HCT116 (cell line): ENCODE measurements at regions of chr1 and their contacts with region 1.

Region 1: GRCh38 chr1:27671964-27672749 is at the start of gene IFI6:
- DNase-seq: peak; percentile 79
- ATAC-seq: peak; percentile 93
- H3K4me3 ChIP-seq: peak within 1 kb of the TSS; percentile 41 to 56
- H3K27ac ChIP-seq: peak within 1 kb of the TSS; percentile 50
- H3K4me1 ChIP-seq: peaks cover 18 to 45% of the 10 kb centered on the region in 2 experiments
- H3K27me3 ChIP-seq: no peaks in the 10 kb centered on the region
- CTCF ChIP-seq: peak; percentile 7 to 36 (median 34); a peak in 4 of 6 replicates
- POLR2A ChIP-seq: peak; percentile 61
- RAD21 ChIP-seq: peak; percentile 37; the same call in 1 of the 2 replicates
- total RNA-seq, gene IFI6: 14.8 TPM

Region 2: DNA sequence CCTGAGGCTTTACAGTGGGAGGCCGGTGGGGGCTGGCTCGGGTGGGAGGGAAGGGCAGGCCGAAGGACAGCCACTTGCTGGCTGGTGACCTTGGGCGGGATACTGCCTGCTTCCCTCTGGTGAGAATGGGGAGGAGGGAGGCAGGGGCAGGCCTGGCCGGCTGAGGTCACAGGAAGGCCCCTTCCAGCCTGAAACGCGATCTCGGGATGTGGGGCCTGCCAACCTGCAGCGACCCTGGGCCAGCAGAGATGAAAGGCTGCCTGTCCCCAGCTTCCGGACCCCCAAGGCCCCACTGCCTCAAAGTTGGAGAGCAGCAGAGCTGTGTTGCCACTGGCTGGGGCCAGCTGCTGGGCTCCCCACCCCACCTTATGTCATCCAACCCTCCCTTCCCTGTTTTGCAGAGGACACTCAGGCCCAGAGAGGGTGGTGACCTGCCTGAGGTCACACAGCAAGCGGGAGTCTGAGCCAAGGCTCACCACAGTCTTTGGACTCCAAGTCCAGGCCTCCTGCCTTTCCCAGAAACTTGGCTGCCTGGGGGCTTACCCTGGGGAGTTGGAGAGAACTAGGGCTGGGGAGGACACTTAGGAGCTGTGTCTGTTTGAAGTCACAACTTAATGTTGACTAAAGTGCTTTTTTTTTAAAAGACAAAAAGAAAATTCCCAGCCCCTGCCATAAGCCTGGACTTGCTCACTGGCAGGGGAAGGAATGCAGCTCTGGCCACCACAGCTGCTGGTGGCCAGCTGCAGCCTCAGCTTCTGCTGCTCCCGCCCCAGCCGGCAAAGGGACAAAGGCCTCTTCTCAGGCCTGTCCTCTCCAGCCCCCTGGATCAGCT is 167.4 kb before region 1 on chr1:
- CTCF ChIA-PET with region 1: no interaction called
- POLR2A ChIA-PET with region 1: no interaction called
- RAD21 ChIA-PET with region 1: no interaction called
- intact Hi-C with region 1: no loop called
- DNase-seq: no peak
- ATAC-seq: no peak
- H3K4me3 ChIP-seq: no peak overlapping the region
- H3K27ac ChIP-seq: no peak overlapping the region; the same call in 1 of the 2 replicates
- H3K4me1 ChIP-seq: peaks cover 7 to 32% of the 10 kb centered on the region in 2 experiments; a peak in 3 of 4 replicates
- H3K27me3 ChIP-seq: no peaks in the 10 kb centered on the region
- CTCF ChIP-seq: no peak
- POLR2A ChIP-seq: no peak
- RAD21 ChIP-seq: no peak

Region 3: DNA sequence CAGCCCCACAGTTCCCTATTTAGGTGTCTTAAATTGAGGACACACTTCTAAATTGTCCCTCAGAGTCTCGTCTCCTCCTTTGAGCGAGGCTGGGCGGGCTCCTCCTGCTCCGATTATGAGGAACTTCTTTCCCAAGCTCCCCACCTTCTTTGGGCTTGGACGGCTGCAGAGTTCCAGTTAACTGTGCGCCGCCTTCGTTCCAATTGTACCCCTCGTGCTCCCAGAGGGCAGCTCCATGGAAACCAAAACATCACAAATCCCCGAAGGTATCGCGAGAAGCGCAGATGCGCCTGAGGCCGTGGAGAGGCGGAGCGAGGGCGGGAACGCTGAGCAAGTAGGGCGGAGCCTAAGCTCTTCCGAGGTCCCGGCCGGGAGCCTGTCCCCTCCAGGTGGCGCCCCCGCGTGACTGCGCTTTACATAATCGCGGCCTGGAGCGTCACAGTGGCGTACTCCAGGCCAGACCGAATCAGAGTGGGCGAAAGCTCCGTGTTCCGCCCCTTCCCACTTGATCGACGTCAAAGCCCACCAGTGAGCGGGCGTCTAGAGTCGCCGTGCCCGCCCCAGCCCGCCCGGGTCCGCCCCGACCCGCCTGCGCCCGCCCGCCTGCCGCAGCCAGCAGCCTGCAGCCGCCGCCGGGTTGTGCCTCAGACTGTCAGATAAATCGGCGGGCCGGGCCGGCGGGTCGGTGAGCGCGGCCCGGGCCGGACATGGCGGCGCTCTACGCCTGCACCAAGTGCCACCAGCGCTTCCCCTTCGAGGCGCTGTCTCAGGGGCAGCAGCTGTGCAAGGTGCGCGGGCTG is 53.4 kb after region 1 on chr1 and contains the start of gene FAM76A:
- CTCF ChIA-PET with region 1: interaction called, 11 read pairs
- POLR2A ChIA-PET with region 1: interaction called, 7 read pairs
- RAD21 ChIA-PET with region 1: interaction called in 1 of 2 experiments, 3 read pairs
- intact Hi-C with region 1: no loop called
- DNase-seq: peak; percentile 98
- ATAC-seq: peak; percentile 95
- H3K4me3 ChIP-seq: peak within 1 kb of the TSS; percentile 65 to 66
- H3K27ac ChIP-seq: peak within 1 kb of the TSS; percentile 76
- H3K4me1 ChIP-seq: peaks cover 10 to 17% of the 10 kb centered on the region in 2 experiments
- H3K27me3 ChIP-seq: no peaks in the 10 kb centered on the region
- CTCF ChIP-seq: 0 out of 6 replicates have a peak, but pooled peaks of 2 of the 3 experiments have one; percentile 14 to 31
- POLR2A ChIP-seq: no peak
- RAD21 ChIP-seq: no peak
- total RNA-seq, gene FAM76A: 9.6 TPM

Region 4: DNA sequence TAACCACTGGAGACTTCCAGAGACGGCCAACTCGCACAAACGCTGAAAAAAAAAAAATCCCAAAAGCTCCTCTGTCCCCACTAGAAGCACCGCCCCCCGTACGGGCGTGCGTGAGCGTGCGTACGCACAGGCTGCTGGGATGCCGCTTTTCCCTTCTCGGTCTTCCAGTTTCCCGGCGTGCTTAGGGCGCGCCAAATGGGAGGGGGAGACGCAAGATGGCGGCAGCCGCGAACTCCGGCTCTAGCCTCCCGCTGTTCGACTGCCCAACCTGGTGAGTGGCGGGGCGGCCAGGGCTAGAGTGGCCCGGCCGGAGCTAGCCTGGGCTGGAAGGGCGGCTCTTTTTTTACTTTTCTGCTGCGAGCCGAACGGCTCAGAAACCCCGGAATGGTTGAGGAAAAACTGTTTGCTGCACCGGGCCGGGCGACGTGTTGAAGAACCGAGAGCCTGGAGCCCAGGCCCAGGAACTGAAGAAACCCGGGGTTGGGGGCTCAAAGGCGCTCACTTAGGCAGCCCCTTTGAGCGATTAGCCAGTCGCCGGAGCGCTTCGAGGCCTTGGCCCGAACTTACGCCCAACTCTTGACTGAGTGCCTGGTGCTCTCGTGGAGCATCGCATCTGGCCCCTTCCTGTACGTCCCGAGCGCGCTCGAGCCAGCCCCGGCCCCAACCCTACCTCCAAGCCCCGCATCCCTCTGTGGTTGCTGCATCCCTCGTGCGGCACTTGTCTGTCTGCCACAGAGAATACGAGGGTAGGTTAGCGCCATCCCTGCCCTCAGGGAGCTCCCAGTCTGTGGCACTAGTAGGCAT is 158.7 kb after region 1 on chr1 and contains the start of gene PPP1R8:
- CTCF ChIA-PET with region 1: interaction called, 5 read pairs
- POLR2A ChIA-PET with region 1: interaction called, 5 read pairs
- RAD21 ChIA-PET with region 1: no interaction called
- intact Hi-C with region 1: loop called (anchors 5 kb)
- DNase-seq: peak; percentile 91
- ATAC-seq: peak; percentile 99
- H3K4me3 ChIP-seq: peak within 1 kb of the TSS; percentile 94 to 97
- H3K27ac ChIP-seq: peak within 1 kb of the TSS; percentile 73
- H3K4me1 ChIP-seq: peaks cover 9 to 26% of the 10 kb centered on the region in 2 experiments
- H3K27me3 ChIP-seq: no peaks in the 10 kb centered on the region
- CTCF ChIP-seq: no peak
- POLR2A ChIP-seq: peak; percentile 97
- RAD21 ChIP-seq: no peak
- total RNA-seq, gene PPP1R8: 57.4 TPM